Aorta (tissue), 5 donors: ENCODE measurements at regions of chr12 and their contacts with region 1.

Region 1: GRCh38 chr12:88207921-88208620 is 66.0 kb downstream of the TMTC3 start:
- DNase-seq: peak in 1 of 2 donors; percentile 67
- ATAC-seq: peak; percentile 88
- H3K4me3 ChIP-seq: no peak overlapping the region
- H3K27ac ChIP-seq: no peak overlapping the region
- H3K4me1 ChIP-seq: no peaks in the 10 kb centered on the region
- H3K27me3 ChIP-seq: no peaks in the 10 kb centered on the region

Region 2: DNA sequence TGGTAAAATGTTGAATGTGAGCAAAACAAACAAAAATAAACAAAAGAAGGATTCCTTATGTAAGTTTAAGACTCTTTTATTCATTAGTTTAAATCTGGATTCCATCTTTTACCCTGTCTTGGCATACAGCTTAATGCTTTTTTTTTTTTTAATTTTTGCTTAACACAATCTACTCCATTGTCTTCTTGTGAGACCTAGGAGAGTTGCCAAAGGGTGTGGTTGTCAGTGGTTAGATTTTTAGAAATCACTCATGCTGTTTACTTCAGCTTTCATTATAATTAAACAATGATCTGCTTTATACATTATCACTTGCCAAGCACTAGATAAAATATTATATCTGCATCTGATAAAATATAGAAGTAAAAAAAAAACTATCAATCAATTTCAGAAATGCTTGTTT is 449.9 kb after region 1 on chr12:
- intact Hi-C with region 1: loop called in 1 of 2 experiments (anchors 5 kb)
- DNase-seq: no peak
- ATAC-seq: no peak
- H3K4me3 ChIP-seq: no peak overlapping the region
- H3K27ac ChIP-seq: no peak overlapping the region
- H3K4me1 ChIP-seq: no peaks in the 10 kb centered on the region
- H3K27me3 ChIP-seq: no peaks in the 10 kb centered on the region